Activated CD8-positive, alpha-beta T cell treated with anti-CD3 and anti-CD28 coated beads for 36 hours (primary cell): ENCODE measurements at regions of chr12 and their contacts with region 1.

Region 1: GRCh38 chr12:98698603-98699463 is 53.7 kb downstream of the APAF1 start:
- DNase-seq: peak; percentile 66
- ATAC-seq: peak; percentile 94
- H3K4me3 Mint-ChIP-seq: no peak overlapping the region
- H3K27ac Mint-ChIP-seq: no peak overlapping the region
- H3K4me1 Mint-ChIP-seq: peaks cover 8% of the 10 kb centered on the region
- H3K27me3 Mint-ChIP-seq: no peaks in the 10 kb centered on the region
- CTCF ChIP-seq: peak; percentile 65

Region 2: GRCh38 chr12:98714426-98714825 is 15.6 kb after region 1 on chr12:
- CTCF ChIA-PET with region 1: interaction called, 11 read pairs
- POLR2A ChIA-PET with region 1: no interaction called
- intact Hi-C with region 1: no loop called
- DNase-seq: no peak
- ATAC-seq: no peak
- H3K4me3 Mint-ChIP-seq: no peak overlapping the region
- H3K27ac Mint-ChIP-seq: no peak overlapping the region
- H3K4me1 Mint-ChIP-seq: no peaks in the 10 kb centered on the region
- H3K27me3 Mint-ChIP-seq: no peaks in the 10 kb centered on the region
- CTCF ChIP-seq: no peak

Region 3: GRCh38 chr12:98743347-98743953 is 44.6 kb after region 1 on chr12:
- CTCF ChIA-PET with region 1: interaction called, 6 read pairs
- POLR2A ChIA-PET with region 1: no interaction called
- intact Hi-C with region 1: loop called (anchors 5 kb)
- DNase-seq: peak; percentile 68
- ATAC-seq: peak; percentile 35
- H3K4me3 Mint-ChIP-seq: no peak overlapping the region
- H3K27ac Mint-ChIP-seq: no peak overlapping the region
- H3K4me1 Mint-ChIP-seq: peaks cover 29% of the 10 kb centered on the region
- H3K27me3 Mint-ChIP-seq: peaks cover 30% of the 10 kb centered on the region
- CTCF ChIP-seq: peak; percentile 70